GM12878 (cell line): ENCODE measurements at regions of chr4 and their contacts with region 1.

Region 1: GRCh38 chr4:177339477-177340374 is 30.1 kb downstream of the NEIL3 start:
- DNase-seq: peak; percentile 4
- ATAC-seq: peak; percentile 92
- H3K4me3 ChIP-seq: no peak overlapping the region
- H3K27ac ChIP-seq: no peak overlapping the region
- H3K4me1 ChIP-seq: no peaks in the 10 kb centered on the region
- H3K27me3 ChIP-seq: no peaks in the 10 kb centered on the region
- CTCF ChIP-seq: peak; percentile 57 to 61 (median 61); a peak in 5 of 6 replicates
- EP300 ChIP-seq: no peak
- POLR2A ChIP-seq: no peak
- RAD21 ChIP-seq: peak; percentile 81

Region 2: GRCh38 chr4:176207839-176208238 is 1131.9 kb before region 1 on chr4:
- CTCF ChIA-PET with region 1: no interaction called
- POLR2A ChIA-PET with region 1: no interaction called
- RAD21 ChIA-PET with region 1: no interaction called
- SMC1A ChIA-PET with region 1: no interaction called
- in situ Hi-C with region 1: no loop called
- intact Hi-C with region 1: no loop called
- DNase-seq: no peak
- ATAC-seq: no peak
- H3K4me3 ChIP-seq: no peak overlapping the region
- H3K27ac ChIP-seq: no peak overlapping the region
- H3K4me1 ChIP-seq: no peaks in the 10 kb centered on the region
- H3K27me3 ChIP-seq: peaks cover 0 to 2% of the 10 kb centered on the region in 2 experiments; a peak in 2 of 4 replicates
- CTCF ChIP-seq: no peak
- EP300 ChIP-seq: no peak
- POLR2A ChIP-seq: no peak
- RAD21 ChIP-seq: no peak

Region 3: DNA sequence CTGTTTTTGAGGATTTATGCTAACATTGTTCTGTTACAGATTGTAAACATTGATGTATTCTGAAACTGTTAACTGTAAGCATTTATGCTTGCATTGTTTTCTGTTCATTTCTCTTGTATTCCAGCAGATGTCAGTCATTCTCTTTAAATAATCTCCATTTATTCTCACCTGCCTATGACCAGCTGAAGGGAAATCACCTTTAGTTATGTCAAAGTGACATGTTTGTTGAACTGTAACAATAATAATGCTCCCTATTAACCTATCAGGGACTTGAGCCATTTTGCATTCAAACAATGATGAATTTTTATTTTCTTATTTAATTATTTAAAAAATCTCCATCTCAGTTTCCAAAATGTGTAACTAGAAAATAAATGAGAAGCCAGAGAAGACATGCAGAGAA is 961.9 kb before region 1 on chr4:
- CTCF ChIA-PET with region 1: interaction called, 7 read pairs
- POLR2A ChIA-PET with region 1: no interaction called
- RAD21 ChIA-PET with region 1: no interaction called
- SMC1A ChIA-PET with region 1: no interaction called
- in situ Hi-C with region 1: loop called (anchors 25 kb)
- intact Hi-C with region 1: loop called (anchors 2 kb)
- DNase-seq: no peak
- ATAC-seq: peak; percentile 86
- H3K4me3 ChIP-seq: no peak overlapping the region
- H3K27ac ChIP-seq: no peak overlapping the region
- H3K4me1 ChIP-seq: no peaks in the 10 kb centered on the region
- H3K27me3 ChIP-seq: no peaks in the 10 kb centered on the region
- CTCF ChIP-seq: peak; percentile 38 to 69 (median 61); a peak in 5 of 6 replicates
- EP300 ChIP-seq: no peak
- POLR2A ChIP-seq: no peak
- RAD21 ChIP-seq: peak; percentile 87

Region 4: DNA sequence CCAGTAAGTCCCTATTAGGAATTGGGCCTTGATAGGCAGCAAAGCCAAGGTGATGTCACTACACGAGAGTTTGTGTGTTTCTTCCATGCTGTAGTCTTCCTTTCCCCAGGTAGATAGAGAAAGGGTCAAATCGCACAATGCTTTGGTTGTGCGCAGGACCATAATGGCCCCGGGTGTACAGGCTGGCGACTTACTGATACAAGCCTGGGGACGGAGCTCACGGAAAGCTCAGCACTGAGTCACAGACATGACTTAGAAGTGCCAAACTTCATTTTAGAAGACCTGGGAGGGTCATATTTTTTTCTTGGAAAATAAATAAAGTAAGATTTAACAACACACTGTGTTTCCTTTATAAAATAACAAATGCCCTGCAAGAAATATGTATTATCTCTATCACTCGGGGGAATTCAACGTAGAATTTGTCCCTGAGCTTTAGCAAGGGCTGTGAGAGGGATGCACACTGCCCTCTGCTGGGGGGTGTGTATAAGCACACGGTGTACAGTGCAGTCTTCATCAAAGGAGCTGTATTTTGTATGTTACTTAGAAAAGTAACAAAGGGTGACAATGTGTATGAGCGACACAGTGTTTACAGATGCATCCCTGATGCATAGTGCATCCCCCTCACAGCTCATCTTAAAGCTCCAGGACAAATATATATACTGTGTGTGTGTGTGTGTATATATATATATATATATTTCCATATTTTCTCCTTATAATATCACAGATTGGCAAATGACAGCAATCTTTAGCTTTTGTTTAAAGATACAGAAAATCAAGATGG is 292.5 kb before region 1 on chr4:
- CTCF ChIA-PET with region 1: interaction called, 16 read pairs
- POLR2A ChIA-PET with region 1: no interaction called
- RAD21 ChIA-PET with region 1: interaction called, 6 read pairs
- SMC1A ChIA-PET with region 1: interaction called, 10 read pairs
- in situ Hi-C with region 1: loop called (anchors 5 kb)
- intact Hi-C with region 1: loop called (anchors 1 kb)
- DNase-seq: no peak
- ATAC-seq: peak; percentile 94
- H3K4me3 ChIP-seq: no peak overlapping the region
- H3K27ac ChIP-seq: no peak overlapping the region
- H3K4me1 ChIP-seq: no peaks in the 10 kb centered on the region
- H3K27me3 ChIP-seq: no peaks in the 10 kb centered on the region; a peak in 1 of 4 replicates
- CTCF ChIP-seq: peak; percentile 67 to 75 (median 72)
- EP300 ChIP-seq: no peak
- POLR2A ChIP-seq: no peak
- RAD21 ChIP-seq: peak; percentile 70

Region 5: DNA sequence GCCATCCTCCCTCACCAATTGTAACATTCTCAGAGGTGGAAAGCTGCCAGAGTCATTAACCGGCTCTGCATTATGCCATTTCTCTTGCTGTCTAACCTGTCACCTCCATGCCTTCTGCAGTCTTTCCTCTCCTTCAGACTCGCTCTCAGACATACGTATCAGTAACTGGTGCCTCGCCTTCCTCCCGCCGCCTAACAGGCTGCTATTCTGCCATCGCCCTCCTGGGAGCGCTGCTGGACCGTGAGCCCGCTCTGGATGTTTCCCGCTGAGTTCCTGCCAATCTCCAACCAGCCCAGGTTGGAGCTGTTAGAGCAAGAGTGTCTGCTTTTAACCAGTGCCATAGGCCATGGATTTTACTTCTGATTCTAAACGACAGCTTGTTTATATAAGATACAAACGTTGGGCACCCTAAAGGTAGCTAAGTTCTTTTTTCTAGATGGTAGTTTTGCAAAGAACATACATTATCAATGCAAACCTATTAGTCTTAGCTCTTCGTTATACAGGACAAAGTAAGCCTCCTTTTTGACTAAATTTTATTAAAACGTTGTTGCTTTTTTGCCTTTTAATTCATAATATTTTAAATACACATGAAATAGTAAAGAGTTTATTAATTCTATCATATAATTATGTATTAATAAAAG is 89.5 kb before region 1 on chr4:
- CTCF ChIA-PET with region 1: interaction called, 65 read pairs
- POLR2A ChIA-PET with region 1: no interaction called
- RAD21 ChIA-PET with region 1: interaction called, 30 read pairs
- SMC1A ChIA-PET with region 1: interaction called, 29 read pairs
- in situ Hi-C with region 1: no loop called
- intact Hi-C with region 1: loop called (anchors 1 kb)
- DNase-seq: no peak
- ATAC-seq: peak; percentile 96
- H3K4me3 ChIP-seq: no peak overlapping the region
- H3K27ac ChIP-seq: no peak overlapping the region
- H3K4me1 ChIP-seq: no peaks in the 10 kb centered on the region
- H3K27me3 ChIP-seq: no peaks in the 10 kb centered on the region; a peak in 1 of 4 replicates
- CTCF ChIP-seq: peak; percentile 90 to 92 (median 90)
- EP300 ChIP-seq: no peak
- POLR2A ChIP-seq: no peak
- RAD21 ChIP-seq: peak; percentile 95

Region 6: GRCh38 chr4:177427192-177427591 is 87.5 kb after region 1 on chr4:
- CTCF ChIA-PET with region 1: interaction called, 3 read pairs
- POLR2A ChIA-PET with region 1: no interaction called
- RAD21 ChIA-PET with region 1: no interaction called
- SMC1A ChIA-PET with region 1: no interaction called
- in situ Hi-C with region 1: no loop called
- intact Hi-C with region 1: loop called (anchors 1 kb)
- DNase-seq: no peak
- ATAC-seq: no peak
- H3K4me3 ChIP-seq: no peak overlapping the region
- H3K27ac ChIP-seq: no peak overlapping the region
- H3K4me1 ChIP-seq: no peaks in the 10 kb centered on the region
- H3K27me3 ChIP-seq: no peaks in the 10 kb centered on the region
- CTCF ChIP-seq: no peak
- EP300 ChIP-seq: no peak
- POLR2A ChIP-seq: no peak
- RAD21 ChIP-seq: no peak